ENCODE measurements at regions of chr2 and their contacts with region 1.

Region 1: GRCh38 chr2:218406209-218406948 is 6.7 kb downstream of the CTDSP1 start:
- DNase-seq: peak; percentile 97
- ATAC-seq: peak; percentile 88
- H3K4me3 Mint-ChIP-seq: peak overlapping the region; percentile 75
- H3K27ac Mint-ChIP-seq: peak overlapping the region; percentile 90
- H3K4me1 Mint-ChIP-seq: peaks cover 38% of the 10 kb centered on the region
- H3K27me3 Mint-ChIP-seq: peaks cover 5% of the 10 kb centered on the region

Region 2: GRCh38 chr2:218466016-218466521 is 59.7 kb after region 1 on chr2:
- CTCF ChIA-PET with region 1: interaction called, 7 read pairs
- POLR2A ChIA-PET with region 1: no interaction called
- intact Hi-C with region 1: loop called (anchors 2 kb)
- DNase-seq: no peak
- ATAC-seq: no peak
- H3K4me3 Mint-ChIP-seq: no peak overlapping the region
- H3K27ac Mint-ChIP-seq: no peak overlapping the region
- H3K4me1 Mint-ChIP-seq: no peaks in the 10 kb centered on the region
- H3K27me3 Mint-ChIP-seq: no peaks in the 10 kb centered on the region

Region 3: GRCh38 chr2:218516614-218517013 is 110.2 kb after region 1 on chr2:
- CTCF ChIA-PET with region 1: no interaction called
- POLR2A ChIA-PET with region 1: no interaction called
- intact Hi-C with region 1: loop called in 1 of 2 experiments (anchors 2 kb)
- DNase-seq: peak; percentile 10
- ATAC-seq: peak; percentile 73
- H3K4me3 Mint-ChIP-seq: no peak overlapping the region
- H3K27ac Mint-ChIP-seq: no peak overlapping the region
- H3K4me1 Mint-ChIP-seq: peaks cover 30% of the 10 kb centered on the region
- H3K27me3 Mint-ChIP-seq: no peaks in the 10 kb centered on the region

Region 4: GRCh38 chr2:218648088-218648786 is 241.9 kb after region 1 on chr2:
- CTCF ChIA-PET with region 1: interaction called, 4 read pairs
- POLR2A ChIA-PET with region 1: no interaction called
- intact Hi-C with region 1: loop called (anchors 1 to 2 kb)
- DNase-seq: peak; percentile 72
- ATAC-seq: peak; percentile 88
- H3K4me3 Mint-ChIP-seq: no peak overlapping the region
- H3K27ac Mint-ChIP-seq: no peak overlapping the region
- H3K4me1 Mint-ChIP-seq: peaks cover 12% of the 10 kb centered on the region
- H3K27me3 Mint-ChIP-seq: no peaks in the 10 kb centered on the region

Region 5: GRCh38 chr2:218671654-218672566 is 265.5 kb after region 1 on chr2 and contains the starts of genes RNF25 and STK36:
- CTCF ChIA-PET with region 1: interaction called, 3 read pairs
- POLR2A ChIA-PET with region 1: no interaction called
- intact Hi-C with region 1: loop called in 1 of 2 experiments (anchors 5 kb)
- DNase-seq: peak; percentile 90
- ATAC-seq: peak; percentile 98
- H3K4me3 Mint-ChIP-seq: peak within 1 kb of the TSS; percentile 95
- H3K27ac Mint-ChIP-seq: peak within 1 kb of the TSS; percentile 87
- H3K4me1 Mint-ChIP-seq: peaks cover 22% of the 10 kb centered on the region
- H3K27me3 Mint-ChIP-seq: no peaks in the 10 kb centered on the region
- total RNA-seq, gene RNF25: 14.1 to 29.2 TPM
- total RNA-seq, gene STK36: 13.1 to 19.3 TPM